AG04449 (cell line): ENCODE measurements at regions of chr5 and their contacts with region 1.

Region 1: DNA sequence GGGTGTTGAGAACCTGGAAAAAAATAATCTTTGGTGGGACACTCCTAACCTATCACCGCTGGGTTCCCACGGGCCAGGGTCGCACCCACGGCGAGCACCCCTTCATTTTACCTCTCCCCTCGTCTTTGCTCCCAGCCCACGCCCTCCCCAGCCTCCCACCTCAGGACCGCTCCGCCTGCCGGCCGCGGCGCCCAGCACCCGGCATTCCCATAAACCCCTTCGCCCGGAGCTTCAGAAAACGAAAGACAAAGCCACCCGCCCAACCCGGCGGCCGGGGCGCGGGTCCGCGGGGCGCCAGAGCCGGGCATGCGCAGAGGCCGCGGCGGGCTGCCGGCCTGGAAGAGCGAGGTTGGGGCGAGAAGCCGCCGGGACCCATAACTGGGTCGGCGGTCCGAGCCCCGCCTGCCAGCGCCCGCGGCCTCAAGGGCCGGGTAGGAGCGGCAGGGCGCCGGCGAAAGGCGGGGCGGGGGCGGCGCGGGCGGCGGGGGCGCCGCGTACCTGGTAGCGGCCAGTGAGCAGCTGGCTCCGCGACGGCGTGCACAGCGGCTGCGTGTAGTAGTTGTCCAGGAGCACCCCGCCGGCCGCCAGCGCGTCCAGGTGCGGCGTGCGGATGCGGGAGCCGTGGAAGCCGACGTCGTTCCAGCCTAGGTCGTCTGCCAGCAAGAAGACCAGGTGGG is 533 bp downstream of the ARSB start:
- DNase-seq: no peak
- H3K4me3 ChIP-seq: peak overlapping the region; percentile 73
- CTCF ChIP-seq: peak; percentile 64

Region 2: GRCh38 chr5:78899922-78900362 is 84.6 kb before region 1 on chr5:
- CTCF ChIA-PET with region 1: interaction called, 19 read pairs
- POLR2A ChIA-PET with region 1: no interaction called
- DNase-seq: no peak
- H3K4me3 ChIP-seq: no peak overlapping the region
- CTCF ChIP-seq: peak; percentile 70

Region 3: DNA sequence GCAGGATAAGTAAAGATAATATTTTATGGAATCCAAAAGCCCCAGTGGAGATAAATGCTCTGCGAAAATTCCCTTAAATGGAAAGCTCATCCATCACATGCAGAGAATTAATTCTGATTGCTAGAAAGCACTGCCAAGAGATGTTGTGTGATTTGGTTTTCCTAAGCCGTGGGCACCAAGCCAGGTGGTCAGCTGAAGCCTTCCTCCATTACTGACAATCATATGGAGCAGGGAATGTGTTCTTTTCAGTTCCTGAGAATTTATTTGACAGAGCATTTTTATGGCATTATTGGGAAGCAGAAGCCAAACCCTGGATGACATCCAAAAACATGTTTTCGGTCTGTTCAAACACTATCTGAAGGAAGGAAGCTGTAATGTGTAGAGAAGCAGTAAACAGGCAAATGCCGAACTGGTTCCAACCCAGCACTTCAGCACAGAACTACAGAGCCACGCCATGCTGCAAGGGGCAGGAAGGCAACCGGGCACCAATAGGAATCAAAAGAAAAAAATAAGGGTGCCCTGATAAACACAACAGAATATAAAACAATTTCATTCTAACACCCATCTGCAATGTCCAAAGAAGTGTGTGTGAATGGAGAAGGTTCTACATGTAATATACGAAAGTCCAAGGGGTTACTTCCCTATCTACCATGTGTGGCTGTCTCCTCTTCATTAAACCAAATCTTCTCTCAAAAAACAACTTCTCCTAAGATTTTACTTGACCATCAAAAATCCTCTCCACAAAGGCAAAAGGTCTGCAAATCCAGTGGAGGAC is 11.7 kb before region 1 on chr5:
- CTCF ChIA-PET with region 1: interaction called, 13 read pairs
- POLR2A ChIA-PET with region 1: no interaction called
- DNase-seq: no peak
- H3K4me3 ChIP-seq: no peak overlapping the region
- CTCF ChIP-seq: no peak

Region 4: DNA sequence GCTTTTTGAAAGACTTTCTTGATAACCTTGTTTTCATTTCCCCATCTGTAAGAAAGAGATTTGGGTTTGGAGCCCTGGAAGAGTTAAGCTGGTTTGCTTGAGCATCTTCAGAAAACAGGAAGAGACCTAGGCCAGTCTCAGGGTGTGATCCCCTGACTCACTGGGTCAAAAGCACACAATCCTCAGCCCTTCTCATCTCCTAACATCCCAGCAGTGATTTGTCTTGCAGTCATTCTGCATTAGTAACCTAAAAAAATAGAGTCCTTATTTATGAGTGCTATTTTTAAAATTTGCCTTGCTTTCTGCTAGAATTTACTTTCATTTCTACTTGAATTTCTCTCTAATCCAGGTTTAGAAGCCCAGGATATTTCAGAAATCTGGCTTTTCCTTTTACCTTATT is 16.9 kb after region 1 on chr5:
- CTCF ChIA-PET with region 1: interaction called, 15 read pairs
- POLR2A ChIA-PET with region 1: interaction called, 7 read pairs
- DNase-seq: no peak
- H3K4me3 ChIP-seq: no peak overlapping the region
- CTCF ChIP-seq: no peak

Region 5: GRCh38 chr5:79011219-79011836 is 26.8 kb after region 1 on chr5:
- CTCF ChIA-PET with region 1: interaction called, 17 read pairs
- POLR2A ChIA-PET with region 1: interaction called, 5 read pairs
- DNase-seq: peak; percentile 85
- H3K4me3 ChIP-seq: no peak overlapping the region
- CTCF ChIP-seq: peak; percentile 45